ENCODE measurements at regions of chr6 and their contacts with region 1.

Region 1: DNA sequence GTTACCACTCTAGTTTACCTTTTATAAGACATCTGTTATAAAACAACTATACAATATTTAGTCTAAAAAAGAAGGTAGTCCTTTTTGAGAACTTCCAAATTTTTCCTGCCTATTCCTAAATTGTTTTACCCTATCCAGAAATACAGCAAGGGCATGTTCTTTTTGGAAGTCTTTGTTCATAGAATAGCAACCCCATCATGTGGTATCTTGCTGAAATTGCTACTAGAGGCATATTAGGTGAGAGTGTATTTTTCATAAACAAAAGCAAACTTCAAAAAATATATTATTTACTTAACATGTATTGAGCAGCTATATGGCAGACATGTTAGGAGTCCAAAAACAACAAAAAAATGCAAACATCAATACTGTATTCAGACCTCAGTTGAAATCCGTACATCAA is 371.8 kb upstream of the NRSN1 start:
- DNase-seq: peak; percentile 19
- ATAC-seq: no peak
- H3K4me3 ChIP-seq: no peak overlapping the region
- H3K27ac ChIP-seq: no peak overlapping the region
- H3K4me1 ChIP-seq: no peaks in the 10 kb centered on the region
- H3K27me3 ChIP-seq: peaks cover 10% of the 10 kb centered on the region
- CTCF ChIP-seq: peak; percentile 59

Region 2: DNA sequence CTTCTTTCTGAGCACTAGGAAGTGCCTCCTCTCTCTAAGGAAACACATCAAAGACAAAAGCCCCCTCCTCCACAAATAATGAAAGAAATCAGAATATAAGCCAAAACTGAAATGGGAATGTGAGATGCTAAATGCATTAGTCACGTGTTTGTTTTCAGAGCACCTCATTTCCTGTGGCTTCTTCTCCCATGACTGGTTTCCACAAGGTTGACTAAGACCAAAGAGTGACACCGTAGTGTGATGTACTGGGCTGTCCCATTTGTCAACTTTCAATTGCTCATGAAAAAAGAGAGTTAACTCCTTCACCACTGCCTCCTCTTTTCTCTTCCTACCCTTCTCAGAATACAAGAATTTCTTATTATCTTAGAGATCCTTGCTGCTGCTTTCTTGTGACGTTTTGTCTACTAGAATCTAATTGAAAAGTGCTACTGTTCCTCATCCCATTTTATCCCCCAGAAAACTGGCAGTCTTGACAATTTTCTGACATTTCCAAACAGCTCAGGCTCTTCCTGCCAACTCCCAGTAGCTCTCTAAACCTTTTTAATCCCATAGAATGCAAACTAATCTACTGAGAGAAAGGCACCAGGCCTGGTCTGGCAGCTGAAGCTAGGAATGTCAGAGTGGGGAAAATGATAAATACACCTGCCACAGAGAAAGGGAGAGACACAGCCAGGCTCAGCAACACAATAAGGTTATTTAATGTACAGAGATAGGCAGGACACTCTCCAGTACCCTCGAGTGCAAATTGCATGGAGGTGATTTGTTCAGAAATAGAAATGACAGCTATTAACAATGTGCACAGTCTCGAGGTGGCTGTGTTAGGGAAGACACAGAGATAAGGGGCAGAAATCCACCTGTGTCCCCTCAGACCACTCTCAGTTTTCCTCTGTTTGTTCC is 299.9 kb before region 1 on chr6:
- CTCF ChIA-PET with region 1: no interaction called
- POLR2A ChIA-PET with region 1: no interaction called
- intact Hi-C with region 1: loop called (anchors 10 kb)
- DNase-seq: peak; percentile 86
- ATAC-seq: peak; percentile 79
- H3K4me3 ChIP-seq: no peak overlapping the region
- H3K27ac ChIP-seq: peak overlapping the region; percentile 45
- H3K4me1 ChIP-seq: peaks cover 25% of the 10 kb centered on the region
- H3K27me3 ChIP-seq: no peaks in the 10 kb centered on the region
- CTCF ChIP-seq: no peak

Region 3: GRCh38 chr6:23659125-23659524 is 95.1 kb before region 1 on chr6:
- CTCF ChIA-PET with region 1: no interaction called
- POLR2A ChIA-PET with region 1: no interaction called
- intact Hi-C with region 1: loop called (anchors 5 kb)
- DNase-seq: peak; percentile 64
- ATAC-seq: peak; percentile 90
- H3K4me3 ChIP-seq: no peak overlapping the region
- H3K27ac ChIP-seq: no peak overlapping the region
- H3K4me1 ChIP-seq: peaks cover 7% of the 10 kb centered on the region; the same call in 1 of the 2 replicates
- H3K27me3 ChIP-seq: no peaks in the 10 kb centered on the region
- CTCF ChIP-seq: peak; percentile 80